ENCODE measurements at regions of chr16 and their contacts with region 1.

Region 1: GRCh38 chr16:87806603-87807546 is 41.1 kb upstream of the KLHDC4 start:
- DNase-seq: peak; percentile 78
- ATAC-seq: peak; percentile 29
- H3K4me3 ChIP-seq: peak overlapping the region in 1 of 5 experiments; percentile 22
- H3K4me3 Mint-ChIP-seq: peak overlapping the region; percentile 85
- H3K27ac ChIP-seq: peak overlapping the region; percentile 62 to 78
- H3K27ac Mint-ChIP-seq: peak overlapping the region; percentile 85
- H3K4me1 ChIP-seq: peaks cover 52 to 78% of the 10 kb centered on the region in 2 donors
- H3K4me1 Mint-ChIP-seq: peaks cover 63% of the 10 kb centered on the region
- H3K27me3 ChIP-seq: peaks cover 0 to under 1% (median 0%) of the 10 kb centered on the region in 4 experiments
- H3K27me3 Mint-ChIP-seq: peaks cover 3% of the 10 kb centered on the region
- CTCF ChIP-seq: no peak

Region 2: GRCh38 chr16:87834623-87835407 is 27.9 kb after region 1 on chr16:
- CTCF ChIA-PET with region 1: interaction called, 9 read pairs
- POLR2A ChIA-PET with region 1: interaction called, 6 read pairs
- intact Hi-C with region 1: loop called (anchors 1 kb)
- DNase-seq: no peak
- ATAC-seq: no peak
- H3K4me3 ChIP-seq: no peak overlapping the region
- H3K4me3 Mint-ChIP-seq: no peak overlapping the region
- H3K27ac ChIP-seq: no peak overlapping the region
- H3K27ac Mint-ChIP-seq: no peak overlapping the region
- H3K4me1 ChIP-seq: peaks cover 3 to 21% of the 10 kb centered on the region in 2 donors
- H3K4me1 Mint-ChIP-seq: peaks cover 14% of the 10 kb centered on the region
- H3K27me3 ChIP-seq: no peaks in the 10 kb centered on the region
- H3K27me3 Mint-ChIP-seq: no peaks in the 10 kb centered on the region
- CTCF ChIP-seq: no peak

Region 3: DNA sequence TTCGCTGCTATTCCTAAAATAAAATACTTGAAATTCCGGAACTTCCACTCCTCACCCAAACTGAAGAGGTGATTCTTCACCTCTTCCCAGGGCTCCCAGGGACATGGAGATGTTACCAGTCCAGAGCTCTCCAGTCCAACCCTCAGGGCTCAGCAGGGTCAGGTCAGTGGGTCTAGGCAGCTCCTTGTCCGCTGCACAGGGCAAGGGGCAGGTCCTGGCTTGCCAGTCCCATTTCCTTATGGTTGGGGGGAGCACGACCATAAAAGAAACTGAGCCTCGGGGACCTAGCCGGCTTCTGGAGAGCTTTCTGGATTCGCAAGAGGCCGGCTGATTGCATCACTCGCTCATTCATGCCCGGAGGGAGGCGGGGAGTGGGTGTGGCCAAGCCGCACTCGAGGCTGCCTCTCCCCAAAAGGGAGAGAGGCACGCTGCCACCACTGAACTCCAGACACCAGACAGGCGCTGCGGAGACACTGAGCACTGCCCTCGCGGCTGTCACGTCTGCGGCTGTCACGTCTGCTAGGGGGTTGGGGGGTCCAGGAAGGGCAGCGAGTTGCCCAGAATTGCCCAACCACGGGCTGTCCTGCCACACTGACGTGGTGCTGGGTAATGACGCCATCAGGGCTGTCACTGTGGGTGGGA is 46.7 kb after region 1 on chr16:
- CTCF ChIA-PET with region 1: interaction called, 26 read pairs
- POLR2A ChIA-PET with region 1: no interaction called
- intact Hi-C with region 1: loop called (anchors 5 kb)
- DNase-seq: peak; percentile 80
- ATAC-seq: peak; percentile 69
- H3K4me3 ChIP-seq: peak overlapping the region in 2 of 5 experiments; percentile 22 to 46
- H3K4me3 Mint-ChIP-seq: peak overlapping the region; percentile 71
- H3K27ac ChIP-seq: no peak overlapping the region
- H3K27ac Mint-ChIP-seq: peak overlapping the region; percentile 15
- H3K4me1 ChIP-seq: peaks cover 4 to 37% of the 10 kb centered on the region in 2 donors
- H3K4me1 Mint-ChIP-seq: peaks cover 29% of the 10 kb centered on the region
- H3K27me3 ChIP-seq: no peaks in the 10 kb centered on the region
- H3K27me3 Mint-ChIP-seq: no peaks in the 10 kb centered on the region
- CTCF ChIP-seq: no peak

Region 4: DNA sequence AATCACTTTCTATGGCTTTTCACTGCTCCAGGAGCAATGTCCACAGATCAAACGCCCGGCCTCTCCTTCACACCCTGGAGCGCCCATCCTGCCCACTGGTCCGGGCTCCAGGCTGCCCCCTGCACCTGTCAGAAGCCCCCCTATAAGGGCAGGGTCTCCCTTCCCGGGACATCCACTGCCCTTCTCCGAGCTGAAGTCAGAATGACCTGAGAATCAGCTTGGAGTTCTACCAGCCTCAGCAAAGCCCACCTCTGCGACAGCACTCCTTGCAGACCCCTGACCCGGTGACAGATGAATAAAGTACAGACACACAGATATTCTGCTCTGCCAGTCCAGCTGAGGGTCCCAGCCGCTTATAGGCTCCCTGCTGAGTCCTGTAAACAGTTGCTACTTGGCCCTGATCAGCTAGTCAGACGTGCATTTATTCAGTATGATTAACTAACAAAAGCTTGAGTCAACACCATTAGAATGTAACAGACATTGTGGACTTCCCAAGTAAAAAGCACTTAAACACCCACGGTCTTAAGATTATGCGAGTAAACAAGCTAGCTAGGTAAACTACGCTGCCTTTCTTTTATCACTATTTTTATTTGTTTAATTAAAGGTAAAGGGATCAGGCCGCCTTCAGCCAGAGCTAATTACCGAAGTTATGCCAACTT is 57.6 kb after region 1 on chr16:
- CTCF ChIA-PET with region 1: interaction called, 11 read pairs
- POLR2A ChIA-PET with region 1: interaction called, 6 read pairs
- intact Hi-C with region 1: no loop called
- DNase-seq: no peak
- ATAC-seq: no peak
- H3K4me3 ChIP-seq: no peak overlapping the region
- H3K4me3 Mint-ChIP-seq: no peak overlapping the region
- H3K27ac ChIP-seq: no peak overlapping the region
- H3K27ac Mint-ChIP-seq: no peak overlapping the region
- H3K4me1 ChIP-seq: peaks cover 5 to 20% of the 10 kb centered on the region in 2 donors
- H3K4me1 Mint-ChIP-seq: peaks cover 32% of the 10 kb centered on the region
- H3K27me3 ChIP-seq: no peaks in the 10 kb centered on the region
- H3K27me3 Mint-ChIP-seq: no peaks in the 10 kb centered on the region
- CTCF ChIP-seq: no peak

Region 5: GRCh38 chr16:87877938-87878507 is 71.1 kb after region 1 on chr16:
- CTCF ChIA-PET with region 1: interaction called, 20 read pairs
- POLR2A ChIA-PET with region 1: no interaction called
- intact Hi-C with region 1: no loop called
- DNase-seq: no peak
- ATAC-seq: no peak
- H3K4me3 ChIP-seq: no peak overlapping the region
- H3K4me3 Mint-ChIP-seq: no peak overlapping the region
- H3K27ac ChIP-seq: no peak overlapping the region
- H3K27ac Mint-ChIP-seq: no peak overlapping the region
- H3K4me1 ChIP-seq: no peaks in the 10 kb centered on the region
- H3K4me1 Mint-ChIP-seq: peaks cover 7% of the 10 kb centered on the region
- H3K27me3 ChIP-seq: peaks cover 0 to 7% (median 1%) of the 10 kb centered on the region in 4 experiments
- H3K27me3 Mint-ChIP-seq: peaks cover 23% of the 10 kb centered on the region
- CTCF ChIP-seq: no peak

Region 6: DNA sequence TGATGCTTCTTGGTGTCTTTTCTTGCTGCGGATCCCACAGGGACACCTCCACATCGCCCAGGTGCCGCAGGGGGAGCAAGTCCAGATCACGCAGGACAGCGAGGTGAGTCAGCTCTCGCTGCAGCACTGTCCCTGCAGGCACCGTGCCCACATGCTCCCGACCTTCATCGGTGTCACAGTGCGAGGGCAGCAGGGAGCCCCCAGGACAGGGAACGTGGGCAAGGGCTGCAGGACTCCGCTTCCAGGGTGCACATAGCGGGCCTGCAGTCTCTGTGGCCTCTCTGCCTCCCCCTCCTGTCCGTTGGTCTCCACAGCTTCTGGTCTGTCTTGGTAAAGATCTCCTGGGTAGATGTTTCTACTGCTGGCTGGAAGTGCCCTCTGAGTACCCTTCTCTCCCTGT is 228.4 kb after region 1 on chr16:
- CTCF ChIA-PET with region 1: no interaction called
- POLR2A ChIA-PET with region 1: no interaction called
- intact Hi-C with region 1: no loop called
- DNase-seq: no peak
- ATAC-seq: no peak
- H3K4me3 ChIP-seq: no peak overlapping the region
- H3K4me3 Mint-ChIP-seq: no peak overlapping the region
- H3K27ac ChIP-seq: no peak overlapping the region
- H3K27ac Mint-ChIP-seq: no peak overlapping the region
- H3K4me1 ChIP-seq: no peaks in the 10 kb centered on the region
- H3K4me1 Mint-ChIP-seq: no peaks in the 10 kb centered on the region
- H3K27me3 ChIP-seq: no peaks in the 10 kb centered on the region
- H3K27me3 Mint-ChIP-seq: no peaks in the 10 kb centered on the region
- CTCF ChIP-seq: no peak

Region 7: DNA sequence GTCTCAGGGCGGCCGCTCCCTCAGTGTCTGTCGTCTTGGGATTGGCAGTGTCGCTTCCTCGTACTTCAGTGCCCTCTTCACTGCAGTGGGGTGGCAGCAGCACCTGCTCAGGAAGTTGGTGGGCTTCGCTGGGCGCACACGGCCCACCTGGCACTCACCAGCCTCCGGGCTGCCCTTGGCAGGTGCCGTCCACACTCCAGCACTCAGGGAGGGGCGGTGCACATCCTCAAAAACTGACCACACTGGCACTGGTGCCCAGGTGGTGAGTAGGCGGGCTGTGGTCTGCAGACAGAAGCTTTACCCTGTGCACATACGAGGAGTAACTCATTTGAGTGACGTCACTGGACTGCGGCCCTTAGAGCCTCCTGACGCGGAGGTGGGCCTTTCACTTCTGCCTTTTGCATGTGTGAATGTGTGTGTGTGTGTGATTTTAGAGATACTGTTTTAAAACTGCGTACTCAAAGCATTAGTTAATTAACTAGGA is 239.0 kb after region 1 on chr16:
- CTCF ChIA-PET with region 1: no interaction called
- POLR2A ChIA-PET with region 1: no interaction called
- intact Hi-C with region 1: loop called (anchors 1 kb)
- DNase-seq: peak; percentile 98
- ATAC-seq: peak; percentile 70
- H3K4me3 ChIP-seq: no peak overlapping the region
- H3K4me3 Mint-ChIP-seq: peak overlapping the region; percentile 86
- H3K27ac ChIP-seq: peak overlapping the region; percentile 85 to 98
- H3K27ac Mint-ChIP-seq: peak overlapping the region; percentile 99
- H3K4me1 ChIP-seq: peaks cover 59 to 82% of the 10 kb centered on the region in 2 donors
- H3K4me1 Mint-ChIP-seq: peaks cover 81% of the 10 kb centered on the region
- H3K27me3 ChIP-seq: no peaks in the 10 kb centered on the region
- H3K27me3 Mint-ChIP-seq: no peaks in the 10 kb centered on the region
- CTCF ChIP-seq: no peak

Measured in B cell (primary cell).